ENCODE measurements at regions of chr12 and their contacts with region 1.

Region 1: GRCh38 chr12:121095544-121096198 is 37.0 kb upstream of the P2RX7 start:
- DNase-seq: peak; percentile 87
- H3K4me3 Mint-ChIP-seq: peak overlapping the region; percentile 68
- H3K27ac Mint-ChIP-seq: no peak overlapping the region
- H3K4me1 Mint-ChIP-seq: peaks cover 35% of the 10 kb centered on the region
- H3K27me3 Mint-ChIP-seq: peaks cover 1% of the 10 kb centered on the region

Region 2: DNA sequence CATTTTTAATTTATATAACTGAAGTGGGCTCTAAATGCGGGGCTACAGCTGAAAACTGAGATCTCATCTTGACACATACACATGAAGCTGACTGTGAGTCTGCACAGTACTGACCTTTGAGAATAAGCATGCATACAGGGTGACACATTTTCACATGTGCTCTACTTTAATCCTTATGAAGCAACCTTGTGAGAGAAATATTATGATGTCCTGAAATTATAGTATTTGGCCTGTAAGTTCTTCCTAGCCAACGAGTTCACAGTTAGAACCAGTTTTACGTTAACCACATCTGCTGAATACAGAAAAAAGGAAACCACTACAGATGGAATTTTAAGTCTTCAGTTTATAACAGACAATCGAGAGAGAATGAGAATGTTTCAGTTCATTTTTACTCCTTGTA is 261.8 kb before region 1 on chr12:
- CTCF ChIA-PET with region 1: no interaction called
- POLR2A ChIA-PET with region 1: no interaction called
- intact Hi-C with region 1: loop called (anchors 10 kb)
- DNase-seq: no peak
- H3K4me3 Mint-ChIP-seq: no peak overlapping the region
- H3K27ac Mint-ChIP-seq: no peak overlapping the region
- H3K4me1 Mint-ChIP-seq: peaks cover 67% of the 10 kb centered on the region
- H3K27me3 Mint-ChIP-seq: no peaks in the 10 kb centered on the region

Region 3: DNA sequence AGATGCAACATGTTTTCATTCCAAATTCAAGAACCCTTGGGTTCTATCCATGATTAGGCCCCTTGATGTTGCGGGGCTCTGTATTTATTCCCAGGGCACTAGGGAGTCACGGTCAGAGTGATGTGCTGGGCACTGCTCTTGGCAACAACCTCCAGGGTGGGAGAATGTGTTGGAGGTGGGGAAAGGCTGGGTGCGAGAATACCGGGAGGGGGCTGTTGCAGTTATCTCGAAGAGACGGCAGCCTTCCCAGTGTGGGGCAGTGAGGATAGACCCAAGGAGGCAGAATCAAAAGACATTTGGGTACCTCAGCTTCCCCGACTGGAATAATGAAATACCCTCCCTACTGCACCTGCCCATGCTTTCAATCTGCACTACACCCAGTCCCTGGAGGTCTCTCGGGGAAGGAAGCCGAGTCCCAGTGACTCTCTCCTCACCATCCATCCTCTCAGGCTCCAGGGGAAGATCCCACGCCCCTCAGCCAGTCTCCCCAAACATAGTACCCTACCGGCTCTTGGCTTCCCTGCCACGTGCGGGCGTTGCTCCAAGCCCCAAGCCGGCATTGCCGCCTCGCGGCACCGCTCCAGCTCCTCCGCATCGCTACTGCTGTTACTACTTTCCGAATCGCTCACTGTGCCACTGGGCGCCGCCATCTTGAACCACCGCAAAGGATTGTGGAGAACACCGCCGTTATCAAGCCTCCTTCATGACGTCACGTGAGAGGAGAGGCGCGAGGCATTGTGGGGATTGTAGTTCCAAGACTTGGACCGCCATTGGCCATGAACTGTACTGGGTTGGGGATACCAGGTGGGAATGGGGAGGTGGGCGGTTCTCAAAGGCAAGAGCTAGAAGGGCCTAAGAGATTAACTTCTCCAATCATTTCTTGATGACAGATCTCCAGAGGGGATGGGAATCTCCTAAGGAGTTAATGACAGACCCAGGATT is 79.6 kb before region 1 on chr12 and contains the start of gene C12orf43:
- CTCF ChIA-PET with region 1: no interaction called
- POLR2A ChIA-PET with region 1: no interaction called
- intact Hi-C with region 1: loop called (anchors 5 kb)
- DNase-seq: peak; percentile 96
- H3K4me3 Mint-ChIP-seq: peak within 1 kb of the TSS; percentile 98
- H3K27ac Mint-ChIP-seq: peak within 1 kb of the TSS; percentile 88
- H3K4me1 Mint-ChIP-seq: peaks cover 16% of the 10 kb centered on the region
- H3K27me3 Mint-ChIP-seq: no peaks in the 10 kb centered on the region
- total RNA-seq, gene C12orf43: 19.4 to 19.6 TPM

Region 4: DNA sequence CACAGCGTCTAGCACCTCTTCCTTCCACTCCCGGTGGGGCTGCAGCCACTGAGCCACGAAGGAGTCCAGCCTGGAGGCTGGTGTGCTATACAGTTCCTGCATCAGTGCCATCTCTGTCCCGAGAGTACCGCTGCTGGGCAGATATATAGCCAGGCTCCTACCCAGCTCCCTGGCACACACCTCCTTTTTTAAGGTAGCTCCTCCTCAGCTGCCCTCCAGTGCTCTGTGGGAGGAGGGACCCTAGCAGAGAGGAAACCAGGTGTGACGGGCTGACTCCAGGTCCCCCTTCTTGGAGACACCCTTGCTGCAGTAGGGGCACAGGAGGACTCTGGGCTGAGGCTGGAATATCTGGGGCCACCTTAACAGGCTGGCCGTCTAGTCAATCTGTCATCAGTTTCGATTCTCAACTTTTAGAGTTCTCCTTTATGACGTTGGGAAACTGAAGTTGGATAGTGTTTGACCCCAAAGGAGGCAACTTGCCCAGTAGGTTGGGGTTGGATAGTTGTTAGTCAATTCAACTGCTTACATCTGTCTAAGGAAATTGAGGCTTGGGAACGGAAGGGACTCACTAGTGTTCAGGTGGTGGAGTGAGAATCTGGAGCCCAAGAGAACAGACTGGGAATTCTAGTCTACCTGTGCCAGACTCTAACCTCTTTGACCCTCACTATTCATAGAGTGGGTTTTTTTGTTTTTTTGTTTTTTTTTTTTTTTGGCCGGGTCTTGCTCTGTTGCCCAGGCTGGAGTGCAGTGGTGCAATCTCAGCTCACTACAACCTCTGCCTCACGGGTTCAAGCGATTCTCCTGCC is 56.6 kb before region 1 on chr12 and contains the start of gene OASL:
- CTCF ChIA-PET with region 1: interaction called, 3 read pairs
- POLR2A ChIA-PET with region 1: interaction called, 4 read pairs
- intact Hi-C with region 1: loop called (anchors 2 kb)
- DNase-seq: peak; percentile 75
- H3K4me3 Mint-ChIP-seq: peak within 1 kb of the TSS; percentile 85
- H3K27ac Mint-ChIP-seq: peak within 1 kb of the TSS; percentile 84
- H3K4me1 Mint-ChIP-seq: peaks cover 50% of the 10 kb centered on the region
- H3K27me3 Mint-ChIP-seq: peaks cover 9% of the 10 kb centered on the region
- total RNA-seq, gene OASL: 21.9 to 26.5 TPM